ENCODE measurements at regions of chr3 and their contacts with region 1.

Region 1: GRCh38 chr3:49539659-49540560 is 14.4 kb upstream of the BSN start:
- DNase-seq: peak; percentile 98
- H3K4me3 ChIP-seq: peak overlapping the region; percentile 56 to 69 (median 58)
- H3K27ac ChIP-seq: peak overlapping the region; percentile 83 to 90 (median 86)
- H3K4me1 ChIP-seq: peaks cover 8 to 37% (median 30%) of the 10 kb centered on the region in 4 donors
- H3K27me3 ChIP-seq: no peaks in the 10 kb centered on the region
- CTCF ChIP-seq: peak; percentile 86 to 98 (median 92)
- EP300 ChIP-seq: no peak
- POLR2A ChIP-seq: no peak

Region 2: GRCh38 chr3:49553692-49554632 is 14.1 kb after region 1 on chr3 and contains the start of gene BSN:
- intact Hi-C with region 1: loop called (anchors 1 kb)
- DNase-seq: peak; percentile 94
- H3K4me3 ChIP-seq: peak within 1 kb of the TSS; percentile 71 to 86 (median 74)
- H3K27ac ChIP-seq: peak within 1 kb of the TSS; percentile 78 to 85 (median 80)
- H3K4me1 ChIP-seq: peaks cover 15 to 23% (median 21%) of the 10 kb centered on the region in 4 donors
- H3K27me3 ChIP-seq: no peaks in the 10 kb centered on the region
- CTCF ChIP-seq: peak in 1 of 3 experiments; percentile 23
- EP300 ChIP-seq: no peak
- POLR2A ChIP-seq: no peak
- total RNA-seq, gene BSN: 0.42 to 1.7 (median 0.78) TPM

Region 3: DNA sequence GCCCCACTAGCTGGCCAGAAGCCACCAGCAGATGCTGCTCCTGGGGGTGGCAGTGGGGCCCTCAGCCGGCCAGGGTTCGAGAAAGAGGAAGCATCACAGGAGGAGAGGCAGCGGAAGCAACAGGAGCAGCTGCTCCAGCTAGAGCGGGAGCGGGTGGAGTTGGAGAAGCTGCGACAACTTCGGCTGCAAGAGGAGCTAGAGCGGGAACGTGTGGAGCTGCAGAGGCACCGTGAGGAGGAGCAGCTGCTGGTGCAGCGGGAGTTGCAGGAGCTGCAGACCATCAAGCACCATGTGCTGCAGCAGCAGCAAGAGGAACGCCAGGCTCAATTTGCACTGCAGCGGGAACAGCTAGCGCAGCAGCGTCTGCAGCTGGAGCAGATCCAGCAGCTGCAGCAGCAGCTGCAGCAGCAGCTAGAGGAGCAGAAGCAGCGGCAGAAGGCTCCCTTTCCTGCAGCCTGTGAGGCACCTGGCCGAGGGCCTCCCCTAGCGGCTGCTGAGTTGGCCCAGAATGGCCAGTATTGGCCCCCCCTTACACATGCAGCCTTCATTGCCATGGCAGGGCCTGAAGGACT is 116.7 kb after region 1 on chr3:
- intact Hi-C with region 1: no loop called
- DNase-seq: no peak
- H3K4me3 ChIP-seq: no peak overlapping the region
- H3K27ac ChIP-seq: no peak overlapping the region
- H3K4me1 ChIP-seq: peaks cover 0 to 7% (median 6%) of the 10 kb centered on the region in 4 donors
- H3K27me3 ChIP-seq: peaks cover 0 to 15% (median 0%) of the 10 kb centered on the region in 4 donors
- CTCF ChIP-seq: no peak
- EP300 ChIP-seq: no peak
- POLR2A ChIP-seq: no peak

Region 4: DNA sequence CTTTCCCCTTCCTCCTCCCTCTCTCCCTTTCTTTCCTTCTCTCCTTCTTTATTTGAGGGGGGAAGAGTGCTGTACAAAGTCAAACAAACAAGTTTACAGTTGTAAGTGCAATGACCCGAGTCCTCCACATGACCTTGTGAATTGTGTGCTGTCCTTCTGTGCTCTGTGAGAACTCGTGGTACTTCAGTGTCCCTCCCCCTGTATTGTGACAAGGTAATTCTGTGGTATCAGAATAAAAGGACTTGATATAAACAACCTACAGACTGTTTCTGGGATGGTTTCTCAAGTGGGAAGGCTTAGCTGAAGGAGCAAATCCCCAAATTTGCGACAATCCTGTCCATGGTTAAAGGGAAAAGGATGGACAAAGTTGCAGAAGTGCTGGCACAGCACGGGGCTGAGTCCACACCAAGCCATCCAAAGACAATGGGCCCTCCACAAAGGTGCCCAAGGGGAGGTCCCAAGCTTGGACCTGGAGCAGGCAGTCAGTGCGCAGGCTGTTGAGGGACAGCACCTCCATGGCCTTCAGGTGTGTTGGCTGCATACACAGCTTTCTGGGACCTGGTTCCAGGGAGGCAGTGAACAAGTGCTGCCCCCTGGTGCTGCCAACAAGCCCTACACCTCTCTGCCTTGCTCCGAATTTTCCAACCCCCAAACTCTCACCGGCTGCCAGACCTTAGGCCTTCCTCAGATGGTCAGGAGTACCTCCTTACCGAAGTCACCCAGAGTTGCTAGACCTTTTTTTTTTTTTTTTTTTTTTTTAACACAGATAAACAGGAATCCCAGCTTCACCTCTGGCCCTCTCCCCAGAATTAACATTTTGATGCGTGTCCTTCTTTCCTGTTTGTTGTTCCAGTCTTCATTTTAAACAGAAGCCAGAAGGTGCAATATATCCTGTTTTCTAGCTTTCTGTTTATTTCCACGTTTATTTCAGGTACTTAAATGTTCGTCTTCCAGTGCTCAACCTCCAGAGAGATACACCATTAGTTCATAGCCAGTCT is 131.7 kb after region 1 on chr3:
- intact Hi-C with region 1: loop called (anchors 2 kb)
- DNase-seq: no peak
- H3K4me3 ChIP-seq: no peak overlapping the region
- H3K27ac ChIP-seq: no peak overlapping the region
- H3K4me1 ChIP-seq: peaks cover 15 to 27% (median 23%) of the 10 kb centered on the region in 4 donors
- H3K27me3 ChIP-seq: peaks cover 0 to 24% (median 2%) of the 10 kb centered on the region in 4 donors
- CTCF ChIP-seq: peak; percentile 72 to 86 (median 78)
- EP300 ChIP-seq: no peak
- POLR2A ChIP-seq: no peak

Measured in esophagus muscularis mucosa (tissue), 4 donors.